Activated T-helper 2 cell treated with anti-CD3 and anti-CD28 coated beads, Interferon-gamma antibody, Interleukin-2, Interleukin-4, amounts not matched to agents 10 μg/mL and 5 μg/mL and 100 μg/mL, durations not matched to agents 14 hours and 24 hours and 36 hours (primary cell): ENCODE measurements at regions of chr7 and their contacts with region 1.

Region 1: GRCh38 chr7:17041324-17041723 is 159.5 kb upstream of the AGR3 start:
- DNase-seq: no peak
- H3K4me3 Mint-ChIP-seq: peak overlapping the region; percentile 13
- H3K27ac Mint-ChIP-seq: peak overlapping the region; percentile 57
- H3K4me1 Mint-ChIP-seq: peaks cover 53% of the 10 kb centered on the region
- H3K27me3 Mint-ChIP-seq: peaks cover 2% of the 10 kb centered on the region

Region 2: GRCh38 chr7:16999541-17000267 is 41.6 kb before region 1 on chr7:
- intact Hi-C with region 1: loop called (anchors 5 kb)
- DNase-seq: peak; percentile 15
- H3K4me3 Mint-ChIP-seq: peak overlapping the region; percentile 53
- H3K27ac Mint-ChIP-seq: peak overlapping the region; percentile 77
- H3K4me1 Mint-ChIP-seq: peaks cover 33% of the 10 kb centered on the region
- H3K27me3 Mint-ChIP-seq: peaks cover 2% of the 10 kb centered on the region

Region 3: GRCh38 chr7:17159500-17160037 is 118.2 kb after region 1 on chr7:
- intact Hi-C with region 1: loop called (anchors 5 kb)
- DNase-seq: no peak
- H3K4me3 Mint-ChIP-seq: no peak overlapping the region
- H3K27ac Mint-ChIP-seq: peak overlapping the region; percentile 36
- H3K4me1 Mint-ChIP-seq: peaks cover 50% of the 10 kb centered on the region
- H3K27me3 Mint-ChIP-seq: no peaks in the 10 kb centered on the region